ENCODE measurements at regions of chr13 and their contacts with region 1.

Region 1: DNA sequence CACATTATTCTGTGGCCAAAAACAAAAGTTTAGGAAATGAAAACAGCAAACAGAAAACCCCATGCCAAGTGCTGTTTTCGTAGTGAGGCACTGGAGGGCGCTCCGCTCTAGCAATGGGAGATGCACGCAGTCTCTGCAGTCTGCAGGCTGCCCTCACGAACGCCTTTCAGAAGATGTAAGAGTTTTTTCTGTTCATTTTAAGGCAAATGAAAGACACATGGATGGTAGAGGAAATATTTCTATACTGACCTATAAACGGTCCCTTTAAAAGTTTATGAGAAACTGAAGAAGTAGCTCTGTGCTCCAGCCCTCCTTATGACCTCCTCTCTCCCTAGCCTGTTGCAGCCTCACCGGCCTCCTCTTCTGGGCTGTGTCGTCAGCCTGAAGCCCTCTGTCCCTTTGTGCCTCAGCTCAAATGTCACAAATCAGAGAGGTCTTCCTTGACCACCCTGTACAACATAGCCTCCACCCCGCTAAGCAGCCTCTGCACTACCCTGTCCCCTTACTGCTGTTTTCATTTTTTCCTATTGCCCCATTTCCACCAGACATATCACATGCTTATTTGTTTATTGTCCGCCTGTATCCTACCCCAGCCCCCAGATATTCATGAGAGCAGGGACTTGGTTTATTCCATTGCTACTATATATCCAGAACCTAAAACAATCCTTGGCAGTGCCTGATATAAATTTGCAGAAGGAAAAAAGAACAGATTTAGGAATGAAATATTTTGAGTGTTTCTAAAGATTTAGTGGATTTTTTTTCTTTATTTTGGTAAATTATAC is 116.4 kb downstream of the TM9SF2 start:
- DNase-seq: peak; percentile 33
- ATAC-seq: peak; percentile 71
- H3K4me3 ChIP-seq: no peak overlapping the region
- H3K27ac ChIP-seq: no peak overlapping the region
- H3K4me1 ChIP-seq: peaks cover 36% of the 10 kb centered on the region
- H3K27me3 ChIP-seq: no peaks in the 10 kb centered on the region
- CTCF ChIP-seq: peak; percentile 79
- EP300 ChIP-seq: no peak
- POLR2A ChIP-seq: no peak
- RAD21 ChIP-seq: peak; percentile 74

Region 2: DNA sequence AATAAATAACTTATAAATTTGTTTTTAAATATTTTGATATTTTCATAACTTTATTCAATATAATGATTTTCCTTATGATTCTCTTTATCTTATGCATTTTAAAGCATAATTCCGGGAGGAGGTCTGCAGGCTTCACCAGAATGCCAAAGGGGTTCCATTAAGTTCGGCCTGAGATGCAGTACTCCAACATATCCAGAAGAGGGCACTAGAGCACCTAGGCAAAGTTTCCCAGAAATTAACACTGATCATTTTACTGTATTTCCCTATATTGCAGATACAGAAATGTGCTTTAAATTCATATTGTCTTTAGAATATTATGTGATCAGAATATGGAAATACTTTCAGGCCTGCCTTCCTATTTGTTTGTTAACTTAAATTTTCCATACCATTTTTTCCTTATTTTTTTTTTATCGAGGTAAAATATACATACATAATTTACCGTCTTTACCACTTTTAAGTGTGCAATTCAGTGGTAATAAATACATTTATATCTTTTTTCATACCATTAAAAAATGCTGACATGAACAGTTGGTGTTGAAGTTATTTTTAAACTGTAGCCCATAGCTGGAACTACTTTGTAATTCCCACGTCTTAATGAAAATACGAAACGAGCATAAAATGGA is 175.3 kb before region 1 on chr13:
- CTCF ChIA-PET with region 1: no interaction called
- POLR2A ChIA-PET with region 1: no interaction called
- in situ Hi-C with region 1: no loop called
- intact Hi-C with region 1: loop called (anchors 2 kb)
- DNase-seq: peak; percentile 35
- ATAC-seq: peak; percentile 32; the same call in 1 of the 3 replicates
- H3K4me3 ChIP-seq: no peak overlapping the region
- H3K27ac ChIP-seq: no peak overlapping the region
- H3K4me1 ChIP-seq: peaks cover 18% of the 10 kb centered on the region; the same call in 1 of the 2 replicates
- H3K27me3 ChIP-seq: peaks cover 0 to 22% of the 10 kb centered on the region in 2 experiments; a peak in 4 of 5 replicates
- CTCF ChIP-seq: peak; percentile 77
- EP300 ChIP-seq: no peak
- POLR2A ChIP-seq: no peak
- RAD21 ChIP-seq: peak; percentile 62; the same call in 1 of the 2 replicates

Region 3: GRCh38 chr13:99528547-99528946 is 89.1 kb before region 1 on chr13:
- CTCF ChIA-PET with region 1: interaction called, 4 read pairs
- POLR2A ChIA-PET with region 1: no interaction called
- in situ Hi-C with region 1: no loop called
- intact Hi-C with region 1: loop called (anchors 1 kb)
- DNase-seq: peak; percentile 17
- ATAC-seq: peak; percentile 76
- H3K4me3 ChIP-seq: no peak overlapping the region
- H3K27ac ChIP-seq: no peak overlapping the region
- H3K4me1 ChIP-seq: no peaks in the 10 kb centered on the region
- H3K27me3 ChIP-seq: no peaks in the 10 kb centered on the region
- CTCF ChIP-seq: peak; percentile 64
- EP300 ChIP-seq: no peak
- POLR2A ChIP-seq: no peak
- RAD21 ChIP-seq: no peak

Region 4: GRCh38 chr13:99577934-99578917 is 39.4 kb before region 1 on chr13:
- CTCF ChIA-PET with region 1: interaction called, 4 read pairs
- POLR2A ChIA-PET with region 1: no interaction called
- in situ Hi-C with region 1: no loop called
- intact Hi-C with region 1: loop called (anchors 5 kb)
- DNase-seq: peak; percentile 47
- ATAC-seq: peak; percentile 85
- H3K4me3 ChIP-seq: peak overlapping the region in 2 of 3 experiments; percentile 24 to 33; a peak in 2 of 6 replicates
- H3K27ac ChIP-seq: no peak overlapping the region
- H3K4me1 ChIP-seq: peaks cover 40% of the 10 kb centered on the region
- H3K27me3 ChIP-seq: no peaks in the 10 kb centered on the region
- CTCF ChIP-seq: peak; percentile 50
- EP300 ChIP-seq: no peak
- POLR2A ChIP-seq: no peak
- RAD21 ChIP-seq: no peak

Region 5: DNA sequence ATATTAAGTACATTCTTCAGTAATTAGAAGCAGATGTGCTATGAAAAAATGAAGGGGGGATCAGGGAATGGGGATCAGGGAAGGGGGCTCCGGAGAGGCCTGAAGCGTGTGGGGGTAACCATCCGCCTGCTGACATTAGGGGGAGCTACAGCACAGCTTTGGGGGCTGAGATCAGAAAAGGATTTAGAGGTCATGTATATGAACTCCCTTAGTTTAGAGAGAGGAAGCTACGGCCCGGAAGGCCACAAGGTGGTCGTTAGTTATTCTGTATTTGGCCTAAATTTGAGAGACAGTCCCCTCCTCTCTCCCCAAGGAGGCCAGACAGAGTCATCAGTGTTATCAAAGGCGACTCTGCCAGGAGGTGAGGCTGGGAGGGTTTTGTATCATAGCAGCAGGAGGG is 17.3 kb before region 1 on chr13:
- CTCF ChIA-PET with region 1: interaction called, 8 read pairs
- POLR2A ChIA-PET with region 1: no interaction called
- in situ Hi-C with region 1: no loop called
- intact Hi-C with region 1: loop called (anchors 1 kb)
- DNase-seq: peak; percentile 31
- ATAC-seq: peak; percentile 97
- H3K4me3 ChIP-seq: 0 out of 6 replicates have a peak overlapping the region, but pooled peaks of 1 of the 3 experiments have one; percentile 24
- H3K27ac ChIP-seq: no peak overlapping the region
- H3K4me1 ChIP-seq: peaks cover 18% of the 10 kb centered on the region
- H3K27me3 ChIP-seq: 0 out of 5 replicates have a peak, but pooled peaks cover 0 to 3% of the 10 kb centered on the region in 2 experiments
- CTCF ChIP-seq: peak; percentile 86
- EP300 ChIP-seq: no peak
- POLR2A ChIP-seq: no peak
- RAD21 ChIP-seq: peak; percentile 76

Region 6: DNA sequence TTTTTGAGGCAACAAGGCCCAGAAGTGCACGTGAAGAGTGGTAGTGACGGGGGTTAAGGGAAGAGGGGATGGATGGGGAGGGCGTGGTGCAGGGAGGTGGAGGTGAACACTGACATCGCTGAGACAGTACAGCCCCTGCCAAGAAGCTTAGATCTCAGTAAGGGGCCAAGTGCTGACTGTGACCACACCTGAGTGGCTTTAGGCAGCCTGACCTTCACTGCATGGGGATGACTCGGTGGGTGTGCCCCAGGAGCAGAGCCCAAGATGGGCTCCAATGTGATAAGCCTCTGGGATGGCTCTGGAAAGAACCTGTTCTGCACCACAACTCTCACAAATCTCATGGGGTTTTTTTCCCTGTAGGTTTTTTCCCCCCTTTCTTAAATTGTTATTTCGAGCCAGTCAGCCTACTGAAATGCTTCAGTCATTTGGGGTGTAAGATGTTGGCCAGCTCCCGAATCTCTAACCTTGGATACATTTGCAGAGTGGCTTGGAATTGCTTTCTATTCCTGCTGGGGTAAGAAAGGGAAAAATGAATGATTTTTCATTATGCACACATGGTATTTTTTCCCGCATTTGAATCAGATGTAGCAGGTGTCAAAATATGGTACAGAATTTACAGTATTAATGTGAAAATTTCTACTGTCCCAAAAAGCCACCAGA is 48.6 kb after region 1 on chr13:
- CTCF ChIA-PET with region 1: no interaction called
- POLR2A ChIA-PET with region 1: no interaction called
- in situ Hi-C with region 1: no loop called
- intact Hi-C with region 1: no loop called
- DNase-seq: no peak
- ATAC-seq: no peak
- H3K4me3 ChIP-seq: no peak overlapping the region
- H3K27ac ChIP-seq: no peak overlapping the region
- H3K4me1 ChIP-seq: peaks cover 27% of the 10 kb centered on the region
- H3K27me3 ChIP-seq: no peaks in the 10 kb centered on the region
- CTCF ChIP-seq: no peak
- EP300 ChIP-seq: no peak
- POLR2A ChIP-seq: no peak
- RAD21 ChIP-seq: no peak